ENCODE measurements at regions of chr11 and their contacts with region 1.

Region 1: DNA sequence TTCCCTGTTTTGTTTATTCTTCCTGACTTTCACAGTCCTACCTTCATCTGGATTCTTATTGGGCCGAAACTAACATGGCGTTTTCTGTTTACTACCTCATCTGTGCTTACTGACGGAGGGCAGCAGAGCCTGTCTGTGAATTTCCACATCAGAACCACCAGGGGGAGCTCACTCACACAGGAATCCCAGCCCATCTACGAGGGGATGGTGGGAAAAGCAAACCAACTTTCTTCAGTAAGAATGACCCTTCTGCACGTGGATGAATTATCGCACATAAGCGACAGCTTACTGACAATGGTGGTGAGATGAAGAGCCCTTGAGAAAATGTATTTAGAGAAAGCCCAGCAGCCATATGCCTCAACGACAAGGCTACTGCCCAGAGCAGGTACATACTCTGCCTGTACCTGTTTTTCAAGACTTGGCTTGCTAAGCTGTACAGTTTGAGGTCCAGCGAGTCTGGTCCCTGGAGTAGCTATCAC is 42.5 kb downstream of the LARGE2 start:
- DNase-seq: peak; percentile 59 to 70
- H3K4me3 ChIP-seq: no peak overlapping the region
- H3K27ac ChIP-seq: peak overlapping the region in 1 of 2 donors; percentile 16
- H3K4me1 ChIP-seq: peaks cover 0 to 4% (median 0%) of the 10 kb centered on the region in 4 donors
- H3K27me3 ChIP-seq: no peaks in the 10 kb centered on the region
- CTCF ChIP-seq: peak; percentile 88 to 89

Region 2: GRCh38 chr11:45779602-45780001 is 185.3 kb before region 1 on chr11:
- intact Hi-C with region 1: no loop called
- DNase-seq: no peak
- H3K4me3 ChIP-seq: no peak overlapping the region
- H3K27ac ChIP-seq: no peak overlapping the region
- H3K4me1 ChIP-seq: no peaks in the 10 kb centered on the region
- H3K27me3 ChIP-seq: peaks cover 0 to 19% of the 10 kb centered on the region in 2 donors
- CTCF ChIP-seq: no peak

Region 3: DNA sequence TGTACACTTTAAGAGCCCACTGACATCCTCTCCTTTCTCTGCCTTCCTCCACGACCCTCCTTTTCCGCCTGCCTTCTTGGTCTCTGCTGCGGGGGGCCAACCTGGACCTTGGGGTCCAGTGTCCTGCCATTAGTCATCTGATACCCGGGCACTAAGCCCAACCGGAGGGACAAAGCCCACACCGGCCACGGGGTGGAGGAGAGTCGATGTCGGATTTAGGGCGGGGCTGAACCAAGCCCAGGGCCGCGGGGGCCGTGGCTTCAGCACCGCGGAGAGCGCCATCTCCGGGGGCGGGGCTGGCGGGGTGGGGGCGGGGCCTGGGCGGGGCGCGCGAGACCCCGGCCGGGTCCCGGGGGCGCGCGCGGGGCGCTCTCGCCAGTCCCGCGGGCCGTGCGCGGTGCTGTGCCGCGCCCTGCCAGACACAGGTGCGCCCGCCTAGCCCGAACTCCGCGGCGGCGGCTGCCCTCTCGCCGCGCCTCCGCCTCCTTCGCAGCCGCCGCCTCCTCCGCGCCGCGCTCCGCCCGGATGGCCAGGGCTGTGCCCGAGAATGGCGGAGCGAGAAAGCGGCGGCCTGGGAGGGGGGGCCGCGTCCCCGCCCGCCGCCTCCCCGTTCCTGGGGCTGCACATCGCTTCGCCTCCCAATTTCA is 79.6 kb before region 1 on chr11 and contains the start of gene MAPK8IP1:
- intact Hi-C with region 1: no loop called
- DNase-seq: no peak
- H3K4me3 ChIP-seq: peak within 1 kb of the TSS; percentile 43 to 60
- H3K27ac ChIP-seq: no peak within 1 kb of the TSS
- H3K4me1 ChIP-seq: peaks cover 0 to 12% (median 7%) of the 10 kb centered on the region in 4 donors
- H3K27me3 ChIP-seq: no peaks in the 10 kb centered on the region
- CTCF ChIP-seq: no peak

Region 4: DNA sequence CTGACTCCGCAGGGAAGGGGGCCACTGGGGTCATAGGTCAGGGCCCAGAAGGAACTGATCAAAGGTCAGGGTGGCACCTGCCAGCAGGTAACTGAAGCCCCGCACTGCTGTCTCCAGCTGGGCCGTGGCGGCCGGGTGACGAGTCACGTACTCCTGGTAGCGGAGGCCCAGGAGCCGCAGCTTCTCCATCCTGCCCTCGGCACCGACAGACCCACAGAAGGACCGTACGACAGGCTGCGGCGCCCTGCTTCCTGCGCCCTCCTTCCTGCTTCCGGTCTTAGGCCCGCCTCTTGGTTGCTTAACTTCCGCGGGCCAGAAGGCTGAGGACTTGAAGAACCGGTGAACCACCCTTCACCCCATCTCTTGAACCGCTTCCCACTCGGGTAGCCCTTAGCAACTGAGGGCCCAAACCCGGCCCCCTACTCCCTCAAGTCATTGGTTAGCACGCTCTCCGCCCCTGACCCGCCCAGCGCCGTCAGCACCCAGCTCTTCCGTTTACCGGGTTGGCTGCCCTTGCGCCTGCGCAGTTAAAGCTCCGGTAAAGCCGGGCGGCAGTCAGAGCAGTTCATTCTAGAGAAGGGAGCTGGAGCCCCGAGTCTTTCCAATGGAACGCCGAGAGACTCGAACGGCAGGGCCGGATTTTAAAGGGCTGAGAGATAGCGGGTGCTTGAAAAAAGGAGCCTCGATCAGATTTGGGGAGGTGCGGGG is 47.2 kb before region 1 on chr11 and contains the start of gene PEX16:
- intact Hi-C with region 1: no loop called
- DNase-seq: peak; percentile 98 to 99
- H3K4me3 ChIP-seq: peak within 1 kb of the TSS; percentile 79 to 81
- H3K27ac ChIP-seq: peak within 1 kb of the TSS; percentile 87 to 89
- H3K4me1 ChIP-seq: peaks cover 10 to 45% (median 23%) of the 10 kb centered on the region in 4 donors
- H3K27me3 ChIP-seq: peaks cover 10 to 16% of the 10 kb centered on the region in 2 donors
- CTCF ChIP-seq: no peak

Region 5: DNA sequence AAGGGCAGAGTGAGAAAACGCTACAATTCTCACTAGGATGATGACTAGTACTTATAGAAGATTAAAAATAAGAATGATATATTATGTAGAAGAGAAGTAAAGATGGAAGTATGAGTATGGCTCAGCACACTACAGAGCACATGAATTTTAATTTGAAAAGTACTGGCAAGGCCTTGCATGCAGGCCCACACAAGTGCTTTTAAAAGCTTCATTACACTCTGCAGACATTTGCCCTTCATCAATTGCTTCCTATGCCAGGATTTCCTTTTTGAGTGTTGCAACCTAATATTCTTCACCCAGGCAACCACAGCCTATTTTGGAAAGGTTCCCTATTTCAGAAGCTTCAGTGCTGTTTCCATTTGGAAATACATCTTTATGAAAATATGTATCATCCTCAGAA is 38.6 kb after region 1 on chr11:
- intact Hi-C with region 1: loop called (anchors 2 kb)
- DNase-seq: no peak
- H3K4me3 ChIP-seq: no peak overlapping the region
- H3K27ac ChIP-seq: peak overlapping the region in 1 of 2 donors; percentile 31
- H3K4me1 ChIP-seq: peaks cover 0 to 41% (median 21%) of the 10 kb centered on the region in 4 donors
- H3K27me3 ChIP-seq: no peaks in the 10 kb centered on the region
- CTCF ChIP-seq: no peak

Region 6: GRCh38 chr11:46315033-46315738 is 350.2 kb after region 1 on chr11:
- intact Hi-C with region 1: loop called (anchors 10 kb)
- DNase-seq: no peak
- H3K4me3 ChIP-seq: no peak overlapping the region
- H3K27ac ChIP-seq: no peak overlapping the region
- H3K4me1 ChIP-seq: no peaks in the 10 kb centered on the region
- H3K27me3 ChIP-seq: peaks cover 0 to 16% of the 10 kb centered on the region in 2 donors
- CTCF ChIP-seq: peak; percentile 65 to 80